Activated CD8-positive, alpha-beta T cell treated with anti-CD3 and anti-CD28 coated beads, Interleukin-2, amount 10 ng/mL, durations not matched to agents 7 days and 5 days (primary cell): ENCODE measurements at regions of chr16 and their contacts with region 1.

Region 1: DNA sequence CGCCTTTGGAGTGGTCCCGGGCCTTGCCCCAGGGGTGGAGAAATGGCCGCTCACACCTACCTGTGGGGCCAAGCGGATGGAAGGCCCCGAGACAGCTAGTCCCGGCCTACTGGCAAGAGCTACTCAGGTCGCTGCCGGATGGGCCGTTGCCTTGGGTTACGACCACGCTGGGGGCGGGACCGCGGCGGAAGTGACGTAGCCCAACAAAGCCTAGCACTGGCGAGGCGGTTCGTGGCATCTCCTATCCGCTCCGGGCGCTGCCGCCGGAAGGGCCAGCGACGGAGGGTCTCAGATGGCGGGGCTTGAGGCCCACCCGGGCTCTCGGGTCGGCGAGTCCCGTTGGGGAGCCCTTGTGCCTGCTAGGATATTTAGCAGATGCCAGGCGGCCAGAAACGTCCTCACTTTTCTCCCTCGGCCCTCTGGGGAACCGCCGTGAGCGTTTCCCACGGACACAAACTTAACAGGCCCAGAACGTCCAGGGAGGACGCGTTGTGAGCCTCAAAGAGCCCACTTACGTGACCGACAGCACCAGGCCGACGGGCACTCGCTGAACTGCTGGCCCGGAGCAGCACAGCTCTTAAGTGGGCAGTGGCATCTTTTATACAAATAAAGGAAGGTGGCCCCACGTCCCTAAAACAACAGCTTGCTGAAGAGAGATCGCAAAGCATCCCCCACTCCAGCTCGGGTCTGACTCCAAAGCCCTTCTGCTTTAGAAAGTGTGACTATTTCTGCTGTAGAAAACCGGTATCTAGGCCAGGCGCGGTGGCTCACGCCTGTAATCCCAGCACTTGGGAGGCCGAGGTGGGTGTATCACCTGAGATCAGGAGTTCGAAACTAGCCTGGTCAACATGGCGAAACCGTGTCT is at the start of gene C16orf46:
- DNase-seq: peak; percentile 98
- ATAC-seq: peak; percentile 90
- H3K4me3 Mint-ChIP-seq: peak within 1 kb of the TSS; percentile 5
- H3K27ac Mint-ChIP-seq: peak within 1 kb of the TSS; percentile 25
- H3K4me1 Mint-ChIP-seq: peaks cover 6% of the 10 kb centered on the region
- H3K27me3 Mint-ChIP-seq: no peaks in the 10 kb centered on the region
- total RNA-seq, gene C16orf46: 0.23 TPM in 1 of 2 experiments, not detected in the other

Region 2: DNA sequence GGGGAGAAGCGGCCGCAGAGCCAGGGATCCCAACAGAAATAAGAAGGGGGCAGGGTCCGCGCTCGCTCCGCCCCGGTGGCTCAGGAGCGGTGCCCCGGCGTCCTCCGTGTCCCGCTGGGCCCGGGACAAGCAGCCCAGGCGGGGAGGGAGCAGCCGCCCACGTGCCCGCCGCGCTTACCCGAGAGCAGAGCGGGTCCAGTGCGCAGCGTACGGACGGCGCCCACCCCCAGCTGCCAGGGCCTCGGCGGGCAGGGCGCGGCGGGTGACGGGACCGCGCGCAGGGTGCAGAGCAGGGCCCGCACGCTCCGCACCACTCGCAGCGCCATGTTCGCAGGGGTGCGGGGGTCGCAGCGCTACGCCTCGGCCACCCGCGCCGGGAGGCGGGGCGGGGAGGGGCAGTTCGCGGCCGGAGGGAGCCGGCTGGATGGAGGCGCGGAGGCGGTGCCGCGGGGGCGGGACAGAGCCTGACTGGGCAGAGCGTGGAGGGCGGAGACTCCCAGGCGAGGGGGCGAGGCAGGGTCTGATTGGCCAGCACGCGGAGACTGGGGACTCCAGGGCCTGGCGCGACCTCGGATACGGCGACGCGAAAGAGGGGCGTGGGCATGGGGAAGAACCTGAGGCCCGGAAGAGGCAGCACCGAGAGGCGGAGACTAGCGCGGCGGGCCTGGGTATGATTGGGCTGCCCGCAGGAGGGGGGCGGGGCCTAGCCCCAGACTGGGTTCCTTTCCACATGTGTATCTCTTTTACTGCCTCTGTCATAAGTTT is 18.8 kb after region 1 on chr16 and contains the start of gene GCSH:
- CTCF ChIA-PET with region 1: interaction called, 4 read pairs
- POLR2A ChIA-PET with region 1: interaction called, 10 read pairs
- DNase-seq: peak; percentile 99
- ATAC-seq: peak; percentile 99
- H3K4me3 Mint-ChIP-seq: peak within 1 kb of the TSS; percentile 74
- H3K27ac Mint-ChIP-seq: peak within 1 kb of the TSS; percentile 46
- H3K4me1 Mint-ChIP-seq: peaks cover 13% of the 10 kb centered on the region
- H3K27me3 Mint-ChIP-seq: no peaks in the 10 kb centered on the region
- total RNA-seq, gene GCSH: 10.1 to 13.9 TPM

Region 3: GRCh38 chr16:81314603-81315270 is 237.4 kb after region 1 on chr16 and contains the start of gene GAN:
- CTCF ChIA-PET with region 1: no interaction called
- POLR2A ChIA-PET with region 1: interaction called, 10 read pairs
- DNase-seq: peak; percentile 97
- ATAC-seq: peak; percentile 96
- H3K4me3 Mint-ChIP-seq: peak within 1 kb of the TSS; percentile 96
- H3K27ac Mint-ChIP-seq: peak within 1 kb of the TSS; percentile 88
- H3K4me1 Mint-ChIP-seq: peaks cover 40% of the 10 kb centered on the region
- H3K27me3 Mint-ChIP-seq: no peaks in the 10 kb centered on the region
- total RNA-seq, gene GAN: 7.7 to 8.5 TPM